ENCODE measurements at regions of chr10 and their contacts with region 1.

Region 1: GRCh38 chr10:101602761-101603398 is 14.8 kb downstream of the DPCD start:
- DNase-seq: peak; percentile 68 to 85 (median 78)
- H3K4me3 ChIP-seq: no peak overlapping the region
- H3K27ac ChIP-seq: peak overlapping the region in 8 of 59 donors; percentile 3 to 62 (median 16)
- H3K27me3 ChIP-seq: no peaks in the 10 kb centered on the region
- CTCF ChIP-seq: peak; percentile 60 to 95 (median 89)

Region 2: DNA sequence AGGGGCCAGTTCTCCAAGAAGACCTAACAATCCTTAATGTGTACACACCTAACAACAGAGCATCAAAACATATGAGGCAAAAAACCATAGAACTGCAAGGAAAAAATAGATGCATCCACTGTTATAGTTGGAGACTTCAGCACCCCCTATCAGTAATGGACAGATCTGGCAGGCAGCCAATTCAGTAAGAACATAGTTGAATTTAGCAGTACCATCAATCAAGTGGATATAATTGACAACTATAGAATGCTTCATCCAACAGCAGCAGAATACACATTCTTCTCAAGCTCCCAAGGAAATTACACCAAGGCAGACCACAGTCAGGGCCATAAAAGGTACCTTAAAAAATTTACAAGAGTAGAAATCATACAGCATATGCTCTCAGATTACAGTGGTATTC is 57.0 kb before region 1 on chr10:
- intact Hi-C with region 1: no loop called
- DNase-seq: no peak
- H3K4me3 ChIP-seq: no peak overlapping the region
- H3K27ac ChIP-seq: no peak overlapping the region
- H3K27me3 ChIP-seq: no peaks in the 10 kb centered on the region
- CTCF ChIP-seq: no peak

Region 3: GRCh38 chr10:101671453-101671852 is 68.6 kb after region 1 on chr10:
- intact Hi-C with region 1: no loop called
- DNase-seq: no peak
- H3K4me3 ChIP-seq: no peak overlapping the region
- H3K27ac ChIP-seq: no peak overlapping the region
- H3K27me3 ChIP-seq: no peaks in the 10 kb centered on the region
- CTCF ChIP-seq: no peak

Region 4: GRCh38 chr10:101693978-101694673 is 91.2 kb after region 1 on chr10:
- intact Hi-C with region 1: loop called in 1 of 2 experiments (anchors 5 kb)
- DNase-seq: peak in 8 of 10 donors; percentile 40 to 74 (median 54)
- H3K4me3 ChIP-seq: peak overlapping the region; percentile 47 to 93 (median 84)
- H3K27ac ChIP-seq: peak overlapping the region; percentile 35 to 99 (median 95)
- H3K27me3 ChIP-seq: no peaks in the 10 kb centered on the region
- CTCF ChIP-seq: peak in 1 of 56 donors; percentile 18

Measured in dorsolateral prefrontal cortex (tissue), 120 donors.